Left ventricle myocardium inferior (tissue), 1 donor: ENCODE measurements at regions of chr4 and their contacts with region 1.

Region 1: DNA sequence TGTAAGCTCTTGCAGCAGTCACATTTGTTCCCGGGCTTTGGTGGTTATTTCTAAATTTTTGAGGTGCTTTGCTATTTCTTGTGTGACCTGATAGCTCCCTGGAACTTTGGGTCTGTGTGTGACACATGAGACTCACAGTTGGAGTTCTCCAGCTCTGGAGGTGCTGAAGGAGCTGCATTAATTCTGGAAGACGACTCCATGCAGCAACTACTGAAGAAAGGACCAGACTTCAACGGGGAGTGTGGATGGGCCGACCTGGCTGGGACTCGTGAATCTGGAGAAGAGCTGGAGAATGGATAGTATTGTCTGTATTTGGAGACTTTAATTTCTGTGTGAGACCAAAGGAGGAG is 1.5 kb downstream of the MRFAP1 start:
- DNase-seq: no peak
- H3K4me3 ChIP-seq: peak overlapping the region; percentile 99
- H3K27ac ChIP-seq: peak overlapping the region; percentile 96
- H3K4me1 ChIP-seq: peaks cover 48% of the 10 kb centered on the region
- H3K27me3 ChIP-seq: no peaks in the 10 kb centered on the region
- CTCF ChIP-seq: no peak

Region 2: DNA sequence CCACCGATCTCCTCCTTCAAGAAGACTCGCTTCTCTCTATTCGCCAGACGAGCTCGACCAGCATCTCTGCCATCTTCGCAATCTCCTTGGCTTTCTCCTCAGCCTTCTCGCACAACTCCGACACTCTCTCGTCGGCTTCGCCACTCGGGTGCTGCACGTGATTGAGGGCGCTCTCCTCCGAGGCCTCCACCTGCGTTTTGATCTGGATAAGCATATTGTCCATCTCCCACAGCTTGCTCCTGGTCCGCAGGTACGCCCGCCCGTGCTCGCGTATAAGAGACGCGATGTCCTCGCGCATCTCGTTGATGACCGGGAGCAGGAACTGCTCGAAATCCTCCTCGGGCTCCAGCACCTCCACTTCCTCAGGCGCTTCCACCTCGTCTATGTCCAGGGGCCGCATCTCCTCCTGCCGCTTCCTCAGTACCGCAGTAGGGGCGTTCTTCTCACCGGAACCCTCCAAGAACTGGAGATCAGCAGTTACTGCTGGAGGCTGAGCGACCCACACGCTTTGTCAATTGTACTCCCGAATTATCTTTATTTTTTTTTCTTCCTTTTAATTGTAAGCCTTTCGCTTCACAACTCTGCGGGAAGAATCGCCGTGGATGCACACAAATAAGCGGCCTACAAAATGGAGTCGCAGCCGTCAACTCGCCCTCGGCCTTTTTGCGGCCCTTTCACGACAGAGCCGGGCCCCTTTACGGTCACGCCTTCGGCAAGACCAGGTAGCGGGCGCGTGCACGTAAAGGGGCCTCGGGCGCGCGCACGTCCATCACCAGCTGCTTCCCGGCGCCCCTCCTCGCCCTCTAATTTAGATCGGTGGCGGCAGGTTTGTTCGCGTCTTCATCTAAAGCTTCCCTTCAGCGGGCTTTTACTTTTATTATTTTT is 67.5 kb after region 1 on chr4 and contains the start of gene MRFAP1L1:
- intact Hi-C with region 1: loop called (anchors 2 kb)
- DNase-seq: peak; percentile 98
- H3K4me3 ChIP-seq: peak within 1 kb of the TSS; percentile 99
- H3K27ac ChIP-seq: peak within 1 kb of the TSS; percentile 93
- H3K4me1 ChIP-seq: peaks cover 60% of the 10 kb centered on the region
- H3K27me3 ChIP-seq: no peaks in the 10 kb centered on the region
- CTCF ChIP-seq: peak; percentile 30
- total RNA-seq, gene MRFAP1L1: 41.5 TPM